ENCODE measurements at regions of chr4 and their contacts with region 1.

Region 1: GRCh38 chr4:122617597-122618593 is 3.0 kb downstream of the IL21 start:
- DNase-seq: no peak
- H3K4me3 Mint-ChIP-seq: peak overlapping the region; percentile 88
- H3K27ac Mint-ChIP-seq: peak overlapping the region; percentile 97
- H3K4me1 Mint-ChIP-seq: peaks cover 70% of the 10 kb centered on the region
- H3K27me3 Mint-ChIP-seq: no peaks in the 10 kb centered on the region

Region 2: GRCh38 chr4:121358473-121358872 is 1259.4 kb before region 1 on chr4:
- CTCF ChIA-PET with region 1: no interaction called
- intact Hi-C with region 1: no loop called
- DNase-seq: no peak
- H3K4me3 Mint-ChIP-seq: no peak overlapping the region
- H3K27ac Mint-ChIP-seq: no peak overlapping the region
- H3K4me1 Mint-ChIP-seq: no peaks in the 10 kb centered on the region
- H3K27me3 Mint-ChIP-seq: peaks cover 20% of the 10 kb centered on the region

Region 3: DNA sequence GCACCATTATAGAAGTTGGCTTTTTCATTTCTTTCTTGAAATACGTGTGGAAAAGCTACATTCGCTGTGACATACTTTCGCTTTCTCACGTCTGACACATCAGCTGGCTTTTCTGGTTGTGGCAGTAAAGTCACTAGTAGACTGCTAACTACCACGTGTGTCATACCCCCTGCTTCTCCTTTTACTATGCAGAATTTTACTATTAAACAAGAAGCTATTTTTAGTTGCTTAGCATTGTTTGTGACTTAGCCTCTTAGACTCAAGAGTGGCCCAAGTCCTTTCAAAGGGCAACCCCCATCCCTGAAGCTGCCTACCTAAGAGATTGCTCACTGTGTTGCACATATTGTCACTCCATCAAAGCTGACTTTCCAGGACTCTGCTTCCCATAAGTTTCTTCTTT is 159.3 kb before region 1 on chr4:
- CTCF ChIA-PET with region 1: interaction called, 3 read pairs
- intact Hi-C with region 1: loop called (anchors 1 kb)
- DNase-seq: peak; percentile 82
- H3K4me3 Mint-ChIP-seq: peak overlapping the region; percentile 68
- H3K27ac Mint-ChIP-seq: peak overlapping the region; percentile 99
- H3K4me1 Mint-ChIP-seq: peaks cover 43% of the 10 kb centered on the region
- H3K27me3 Mint-ChIP-seq: no peaks in the 10 kb centered on the region

Region 4: DNA sequence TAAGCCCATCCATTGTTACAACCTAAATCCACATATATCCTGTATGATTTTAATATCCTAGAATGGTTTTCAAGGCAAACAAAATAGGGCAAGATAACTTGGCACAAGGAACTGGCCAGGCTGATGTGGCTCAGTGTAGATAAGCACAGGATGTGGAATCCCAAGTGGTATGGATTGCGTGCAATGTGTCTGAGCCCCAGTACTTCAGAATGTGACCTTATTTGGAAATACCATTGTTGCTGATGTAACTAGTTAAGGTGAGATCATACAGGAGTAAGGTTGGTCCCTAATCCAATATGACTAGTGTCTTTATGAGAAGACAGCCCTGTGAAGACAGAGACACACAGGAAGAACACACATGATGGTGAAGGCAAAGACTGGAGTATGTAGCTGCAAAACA is 69.4 kb before region 1 on chr4:
- CTCF ChIA-PET with region 1: no interaction called
- intact Hi-C with region 1: loop called (anchors 2 kb)
- DNase-seq: peak; percentile 64
- H3K4me3 Mint-ChIP-seq: peak overlapping the region; percentile 77
- H3K27ac Mint-ChIP-seq: peak overlapping the region; percentile 96
- H3K4me1 Mint-ChIP-seq: peaks cover 93% of the 10 kb centered on the region
- H3K27me3 Mint-ChIP-seq: no peaks in the 10 kb centered on the region

Region 5: DNA sequence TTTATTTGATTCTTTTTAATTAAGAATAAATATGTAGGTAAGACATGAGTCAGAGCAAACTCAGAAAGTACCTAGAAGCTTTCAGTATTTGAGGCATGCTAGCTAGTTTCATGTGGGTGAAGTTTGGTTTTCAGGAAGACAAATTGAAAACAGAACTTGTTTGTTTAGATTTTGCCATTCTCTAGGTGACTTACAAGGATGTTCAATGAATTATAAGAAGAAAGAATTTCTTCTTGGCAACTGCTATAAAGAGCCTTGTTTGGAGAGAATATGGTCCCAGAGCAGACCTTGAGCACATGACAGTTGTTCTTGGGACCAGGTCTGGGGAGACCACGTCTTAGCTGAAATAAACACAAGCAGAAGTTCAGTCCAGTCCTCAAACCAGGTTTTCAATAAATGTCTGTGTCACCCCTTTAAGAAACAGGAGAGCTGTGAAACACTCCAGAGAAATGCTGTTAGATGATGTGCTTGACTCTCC is 41.0 kb after region 1 on chr4:
- CTCF ChIA-PET with region 1: interaction called, 8 read pairs
- intact Hi-C with region 1: loop called (anchors 5 kb)
- DNase-seq: no peak
- H3K4me3 Mint-ChIP-seq: peak overlapping the region; percentile 46
- H3K27ac Mint-ChIP-seq: peak overlapping the region; percentile 95
- H3K4me1 Mint-ChIP-seq: peaks cover 62% of the 10 kb centered on the region
- H3K27me3 Mint-ChIP-seq: no peaks in the 10 kb centered on the region

Region 6: GRCh38 chr4:122716825-122717448 is 99.0 kb after region 1 on chr4:
- CTCF ChIA-PET with region 1: interaction called, 14 read pairs
- intact Hi-C with region 1: loop called (anchors 1 kb)
- DNase-seq: peak; percentile 94
- H3K4me3 Mint-ChIP-seq: no peak overlapping the region
- H3K27ac Mint-ChIP-seq: peak overlapping the region; percentile 65
- H3K4me1 Mint-ChIP-seq: peaks cover 41% of the 10 kb centered on the region
- H3K27me3 Mint-ChIP-seq: no peaks in the 10 kb centered on the region

Region 7: DNA sequence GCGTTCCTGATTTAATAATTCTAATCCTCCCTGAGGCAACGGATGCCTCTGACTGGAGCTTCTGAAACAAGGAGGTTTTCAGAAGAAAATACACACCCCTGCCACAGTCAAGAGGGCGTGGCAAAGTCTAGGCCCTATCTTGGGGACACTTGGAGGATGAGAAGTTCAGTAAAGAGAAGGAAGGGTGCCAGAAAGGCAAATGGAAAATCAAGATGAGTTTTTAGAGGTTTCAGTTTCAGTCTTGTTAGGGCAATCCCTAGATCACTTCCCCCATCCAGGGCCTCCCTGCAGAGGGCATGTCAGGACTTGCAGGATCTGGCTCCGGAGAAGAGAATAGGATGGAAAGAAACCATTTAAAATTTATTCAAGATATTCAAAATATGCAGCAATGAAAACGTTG is 180.2 kb after region 1 on chr4:
- CTCF ChIA-PET with region 1: no interaction called
- intact Hi-C with region 1: no loop called
- DNase-seq: peak; percentile 28
- H3K4me3 Mint-ChIP-seq: no peak overlapping the region
- H3K27ac Mint-ChIP-seq: peak overlapping the region; percentile 41
- H3K4me1 Mint-ChIP-seq: peaks cover 4% of the 10 kb centered on the region
- H3K27me3 Mint-ChIP-seq: no peaks in the 10 kb centered on the region